Activated CD4-positive, alpha-beta T cell treated with anti-CD3 and anti-CD28 coated beads, Interleukin-2, amount 10 ng/mL, durations not matched to agents 24 days and 14 days (primary cell): ENCODE measurements at regions of chr5 and their contacts with region 1.

Region 1: DNA sequence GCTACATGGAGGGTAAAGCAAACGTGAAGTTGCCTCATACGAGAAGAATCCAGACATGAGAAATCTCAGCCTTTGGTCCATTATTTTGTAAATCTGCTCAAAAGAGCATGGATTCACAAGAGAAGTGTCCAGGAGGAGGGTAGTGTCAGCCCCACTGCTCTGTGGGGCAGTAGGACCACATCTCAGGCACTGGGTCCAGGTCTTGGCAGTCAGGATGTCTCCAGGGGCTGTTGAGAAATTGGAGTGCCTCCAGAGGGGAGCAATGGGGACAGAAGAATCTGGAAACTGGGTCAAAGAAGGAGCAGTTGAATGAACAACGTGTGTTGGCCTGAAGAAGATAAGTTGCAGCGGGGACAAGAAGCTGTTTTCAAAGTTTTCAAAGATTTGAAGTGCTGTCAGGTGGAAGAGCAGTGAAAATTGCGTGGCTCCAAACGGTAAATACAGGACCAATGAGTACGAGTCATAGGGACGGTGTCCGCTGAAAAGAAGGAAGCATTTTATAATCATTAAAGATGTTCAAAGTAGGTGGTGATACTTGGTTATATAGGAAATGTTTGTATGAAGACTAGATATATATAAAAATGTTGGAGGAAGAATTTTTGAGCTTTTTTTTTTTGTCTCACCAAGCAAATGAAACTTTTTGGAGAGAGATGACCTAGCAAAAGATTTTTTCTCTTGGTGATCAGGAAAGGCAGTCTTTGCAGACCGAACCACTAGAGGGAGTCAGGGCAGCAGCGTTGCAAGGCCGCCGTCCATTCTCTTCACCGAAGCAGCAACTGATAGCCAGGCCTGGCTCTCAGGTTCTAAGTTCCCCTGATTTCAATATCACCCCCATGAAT is 57.1 kb upstream of the ZBED3 start:
- DNase-seq: peak; percentile 86
- H3K4me3 Mint-ChIP-seq: no peak overlapping the region
- H3K27ac Mint-ChIP-seq: no peak overlapping the region
- H3K4me1 Mint-ChIP-seq: peaks cover 12% of the 10 kb centered on the region
- H3K27me3 Mint-ChIP-seq: peaks cover 14% of the 10 kb centered on the region

Region 2: GRCh38 chr5:76393035-76393680 is 751.1 kb before region 1 on chr5:
- intact Hi-C with region 1: no loop called
- DNase-seq: no peak
- H3K4me3 Mint-ChIP-seq: no peak overlapping the region
- H3K27ac Mint-ChIP-seq: no peak overlapping the region
- H3K4me1 Mint-ChIP-seq: peaks cover 39% of the 10 kb centered on the region
- H3K27me3 Mint-ChIP-seq: no peaks in the 10 kb centered on the region

Region 3: GRCh38 chr5:77337686-77338085 is 193.5 kb after region 1 on chr5:
- intact Hi-C with region 1: no loop called
- DNase-seq: no peak
- H3K4me3 Mint-ChIP-seq: no peak overlapping the region
- H3K27ac Mint-ChIP-seq: no peak overlapping the region
- H3K4me1 Mint-ChIP-seq: no peaks in the 10 kb centered on the region
- H3K27me3 Mint-ChIP-seq: peaks cover 15% of the 10 kb centered on the region

Region 4: GRCh38 chr5:77437194-77437593 is 293.0 kb after region 1 on chr5:
- intact Hi-C with region 1: loop called (anchors 1 kb)
- DNase-seq: peak; percentile 61
- H3K4me3 Mint-ChIP-seq: no peak overlapping the region
- H3K27ac Mint-ChIP-seq: no peak overlapping the region
- H3K4me1 Mint-ChIP-seq: peaks cover 2% of the 10 kb centered on the region
- H3K27me3 Mint-ChIP-seq: no peaks in the 10 kb centered on the region